ENCODE measurements at regions of chr2 and their contacts with region 1.

Region 1: DNA sequence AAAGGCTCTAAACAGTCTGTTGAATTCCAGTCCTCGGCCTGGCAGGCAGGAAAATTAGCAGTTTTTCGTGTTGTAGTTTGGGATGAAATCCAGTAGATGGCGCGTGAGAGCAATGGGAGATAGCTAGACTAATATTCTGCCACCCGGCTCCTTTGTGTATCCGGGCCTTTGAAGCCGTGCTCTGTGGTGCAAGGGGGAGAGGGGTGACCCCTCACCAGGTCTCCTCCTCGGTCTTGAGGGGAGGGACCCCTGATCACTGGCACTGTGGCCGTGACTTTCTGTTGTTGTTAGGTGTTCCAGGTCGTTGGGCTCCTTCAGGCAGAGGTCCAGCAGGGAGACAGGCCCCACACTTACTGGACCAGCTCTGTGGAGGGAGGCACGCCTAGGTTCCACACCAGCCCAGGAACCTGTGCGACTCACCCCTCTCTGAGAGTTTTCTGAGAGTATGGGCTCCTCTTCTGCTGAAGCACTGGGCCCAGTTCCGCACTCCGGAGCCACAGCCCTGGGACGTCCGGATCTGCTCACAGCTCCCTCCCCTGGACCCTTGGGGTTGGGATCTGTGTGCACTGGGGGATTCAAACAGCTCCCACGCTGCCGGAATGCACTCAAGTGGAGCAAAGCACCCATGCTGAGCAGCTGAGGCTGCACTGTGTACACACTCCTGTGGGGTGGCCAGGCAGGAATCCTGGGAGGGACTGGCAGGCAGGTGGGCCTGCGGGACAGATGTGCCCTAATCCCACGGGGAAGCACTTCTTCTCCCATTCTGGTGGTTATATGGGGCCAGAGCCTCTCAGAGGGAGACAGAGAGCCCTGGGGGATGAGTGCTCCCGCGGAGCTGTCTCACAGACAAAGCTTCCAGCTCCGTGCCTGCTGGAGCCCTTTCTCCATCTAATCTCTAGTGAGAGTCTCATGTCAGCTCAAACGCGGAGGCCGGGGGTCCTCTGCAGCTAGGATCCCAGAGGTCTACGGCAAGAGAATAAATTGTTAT is 8.8 kb downstream of the GKN2 start:
- DNase-seq: peak in 5 of 10 donors; percentile 29 to 52 (median 43)
- H3K4me3 ChIP-seq: peak overlapping the region in 1 of 59 donors; percentile 3
- H3K27ac ChIP-seq: no peak overlapping the region
- H3K27me3 ChIP-seq: peaks cover 0 to 5% (median 0%) of the 10 kb centered on the region in 45 donors
- CTCF ChIP-seq: peak; percentile 61 to 88 (median 80)

Region 2: DNA sequence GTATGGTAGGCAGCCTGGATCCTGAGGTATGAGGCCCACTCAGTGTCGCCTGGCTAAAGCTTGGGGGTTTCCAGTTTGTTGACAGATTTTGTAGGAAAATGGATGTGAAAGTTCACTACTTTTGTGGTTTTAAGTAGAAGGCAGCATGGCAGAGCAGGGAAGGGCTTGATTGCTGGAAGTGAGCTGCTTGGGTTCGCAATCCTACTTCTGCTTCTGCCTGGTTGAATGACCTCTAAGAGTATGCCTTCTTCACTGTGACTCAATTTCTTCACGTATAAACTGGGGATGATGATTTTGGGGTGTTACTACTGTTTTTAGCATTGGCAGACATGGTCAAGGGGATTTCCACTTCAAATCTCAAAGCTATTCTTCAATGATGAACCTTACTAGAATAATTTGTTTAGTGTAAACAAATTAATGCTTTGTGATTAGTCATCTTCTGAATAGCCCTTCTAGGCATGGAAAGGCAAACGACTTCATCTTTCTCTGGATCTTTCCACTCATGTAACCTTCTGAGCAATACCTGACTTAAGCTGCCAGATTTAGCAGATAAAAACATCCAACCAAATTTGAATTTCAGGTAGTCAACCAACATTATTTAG is 85.9 kb before region 1 on chr2:
- intact Hi-C with region 1: no loop called
- DNase-seq: no peak
- H3K4me3 ChIP-seq: no peak overlapping the region
- H3K27ac ChIP-seq: no peak overlapping the region
- H3K27me3 ChIP-seq: peaks cover 0 to 14% (median 0%) of the 10 kb centered on the region in 45 donors
- CTCF ChIP-seq: no peak

Region 3: GRCh38 chr2:68980956-68981355 is 37.1 kb after region 1 on chr2:
- intact Hi-C with region 1: no loop called
- DNase-seq: no peak
- H3K4me3 ChIP-seq: no peak overlapping the region
- H3K27ac ChIP-seq: no peak overlapping the region
- H3K27me3 ChIP-seq: peaks cover 0 to 7% (median 0%) of the 10 kb centered on the region in 45 donors
- CTCF ChIP-seq: no peak

Region 4: DNA sequence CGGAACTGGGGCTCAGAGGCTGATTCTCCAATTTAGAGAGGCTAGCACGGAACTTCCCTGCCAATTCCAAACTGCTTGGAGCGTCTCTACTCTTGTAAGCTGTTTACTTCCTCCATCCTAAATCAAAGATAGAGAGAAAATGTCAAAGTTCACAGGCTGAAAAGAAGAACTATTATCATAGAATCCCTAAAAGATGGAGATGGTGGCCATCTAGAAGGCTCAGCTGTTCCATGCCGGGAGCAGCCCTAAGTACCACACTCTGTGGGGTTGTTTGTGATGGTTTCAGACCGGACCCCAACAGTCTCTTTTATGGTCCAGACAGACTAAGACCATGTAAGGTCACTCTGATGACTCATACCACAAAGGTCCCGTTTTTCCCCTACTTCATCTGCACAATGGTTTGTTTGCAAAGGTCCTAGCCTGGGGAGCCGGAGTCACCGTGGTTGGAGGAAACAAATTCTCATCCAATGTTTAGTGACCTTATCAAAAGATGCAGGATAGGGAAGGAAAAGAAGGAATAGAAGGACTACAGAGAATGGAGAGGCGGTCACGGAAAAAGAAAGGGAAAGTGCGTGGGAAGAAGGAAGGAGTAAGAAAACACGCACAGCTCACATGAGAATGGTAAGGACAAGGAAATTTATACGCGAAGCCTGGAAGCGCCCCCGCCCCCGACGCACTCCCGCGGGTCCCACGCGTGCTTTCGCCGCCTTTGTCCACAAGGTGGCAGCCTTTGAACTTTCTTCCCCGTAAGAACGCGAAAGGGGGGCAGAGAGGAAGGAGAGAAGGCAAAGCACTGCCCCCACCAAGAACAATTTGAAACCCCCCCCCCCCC is 68.7 kb after region 1 on chr2:
- intact Hi-C with region 1: loop called in 1 of 2 experiments (anchors 5 kb)
- DNase-seq: peak; percentile 49 to 80 (median 66)
- H3K4me3 ChIP-seq: peak overlapping the region; percentile 51 to 92 (median 79)
- H3K27ac ChIP-seq: peak overlapping the region in 14 of 59 donors; percentile 11 to 85 (median 67)
- H3K27me3 ChIP-seq: peaks cover 0 to 26% (median 0%) of the 10 kb centered on the region in 45 donors
- CTCF ChIP-seq: peak in 55 of 56 donors; percentile 59 to 83 (median 77)